GM18951 (cell line): ENCODE measurements at regions of chr5 and their contacts with region 1.

Region 1: DNA sequence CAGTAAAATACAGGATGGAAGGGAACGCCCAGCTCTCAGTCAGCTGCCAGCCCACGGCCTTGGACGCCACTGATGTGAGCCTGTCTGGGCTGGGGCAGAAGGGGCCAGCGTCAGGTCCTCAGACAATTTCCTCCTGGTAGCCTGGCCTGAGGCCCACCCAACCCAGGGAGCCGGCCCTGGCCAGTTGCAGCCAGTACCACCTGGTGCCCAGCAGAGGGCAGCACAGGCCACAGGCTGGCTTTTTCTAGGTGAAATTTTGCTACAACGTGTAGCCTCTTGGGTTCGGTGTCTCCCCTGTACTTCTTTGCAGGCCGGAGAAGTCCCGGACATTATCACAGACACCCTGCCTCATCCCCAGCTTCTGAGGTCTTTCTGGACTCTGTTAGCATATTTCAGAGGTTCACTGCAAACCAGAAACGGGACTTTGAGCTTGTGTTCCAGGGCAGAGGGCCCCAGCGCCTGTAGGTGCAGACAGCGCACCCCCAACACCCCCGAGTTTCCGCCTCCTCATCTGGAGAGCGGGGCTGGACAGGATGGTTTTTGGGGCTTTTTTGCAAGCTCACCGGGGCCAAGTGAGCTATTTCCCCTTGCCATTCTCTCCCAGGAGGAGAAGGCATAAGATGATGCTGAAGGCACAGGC is 45.9 kb upstream of the KCNMB1 start:
- POLR2A ChIP-seq: no peak

Region 2: DNA sequence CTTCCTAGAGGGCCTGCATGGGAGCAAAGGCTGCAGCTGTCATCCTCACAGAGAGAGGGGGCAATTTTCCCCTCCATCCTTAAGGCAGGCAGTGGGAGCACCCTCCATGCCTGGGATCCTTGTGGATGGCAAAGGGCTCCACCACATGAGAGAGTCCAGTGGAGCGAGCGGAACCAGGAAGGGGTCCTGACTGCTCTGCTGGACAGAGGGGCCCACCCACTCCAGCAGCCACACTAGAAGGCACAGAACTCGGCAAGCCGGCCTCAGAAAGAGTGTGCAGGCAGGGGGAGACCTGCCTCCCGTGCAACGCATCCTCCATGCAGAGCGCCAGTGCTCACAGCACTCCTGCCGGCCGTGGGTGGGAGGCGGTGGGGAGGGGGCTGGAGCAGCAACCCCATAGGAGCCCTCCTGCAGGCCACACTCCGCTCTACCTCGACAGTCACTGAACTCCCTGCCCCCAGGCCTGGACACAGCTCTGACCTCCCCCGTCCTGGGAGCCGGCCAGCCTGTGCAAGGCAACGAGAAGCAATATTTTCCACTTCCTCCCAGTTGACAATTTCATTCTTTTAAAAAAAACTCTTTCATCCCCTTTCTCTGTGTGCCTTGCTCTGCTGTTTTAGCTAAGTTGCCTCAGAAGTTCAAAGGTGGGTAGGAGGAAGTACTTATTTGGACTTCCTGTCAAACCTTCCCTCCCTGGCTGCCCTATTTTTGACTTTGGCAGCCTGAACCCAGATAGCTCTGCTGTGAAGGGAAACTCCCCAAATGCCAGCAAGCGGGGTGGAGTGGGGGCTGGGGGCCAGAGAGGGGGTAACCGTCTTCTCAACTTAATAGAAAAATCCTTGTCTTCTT is 132.2 kb before region 1 on chr5:
- in situ Hi-C with region 1: no loop called
- POLR2A ChIP-seq: no peak

Region 3: DNA sequence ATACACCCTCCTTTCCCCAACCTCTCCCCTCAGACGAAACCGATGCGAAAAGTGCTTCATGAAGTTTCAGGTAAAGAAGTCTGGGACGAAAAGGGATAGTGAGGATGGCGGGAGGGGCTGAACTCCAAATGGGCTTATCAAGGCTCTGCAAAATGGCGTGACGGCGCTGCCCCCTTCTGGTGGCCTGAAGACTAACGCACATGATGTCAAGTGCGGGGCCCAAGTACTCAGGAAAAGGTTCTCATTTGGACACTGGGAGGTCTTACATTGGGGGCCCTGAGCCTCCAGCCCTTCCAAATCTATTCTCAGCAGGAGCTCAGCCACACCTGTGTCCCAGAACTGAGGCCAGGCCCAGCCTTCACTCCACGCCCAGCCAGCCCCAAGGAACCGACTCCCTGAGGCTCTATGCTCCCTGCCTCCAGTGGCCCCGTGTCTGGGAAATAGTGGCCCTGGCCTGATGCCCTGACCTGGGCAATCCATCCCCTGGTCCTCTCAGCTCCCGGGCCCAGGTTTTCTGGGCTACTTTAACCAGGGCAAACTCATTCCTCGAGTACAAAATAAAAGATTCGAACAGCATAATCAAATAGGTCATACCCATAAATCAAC is 188.6 kb after region 1 on chr5:
- in situ Hi-C with region 1: loop called (anchors 10 kb)
- POLR2A ChIP-seq: no peak